ENCODE measurements at regions of chr6 and their contacts with region 1.

Region 1: DNA sequence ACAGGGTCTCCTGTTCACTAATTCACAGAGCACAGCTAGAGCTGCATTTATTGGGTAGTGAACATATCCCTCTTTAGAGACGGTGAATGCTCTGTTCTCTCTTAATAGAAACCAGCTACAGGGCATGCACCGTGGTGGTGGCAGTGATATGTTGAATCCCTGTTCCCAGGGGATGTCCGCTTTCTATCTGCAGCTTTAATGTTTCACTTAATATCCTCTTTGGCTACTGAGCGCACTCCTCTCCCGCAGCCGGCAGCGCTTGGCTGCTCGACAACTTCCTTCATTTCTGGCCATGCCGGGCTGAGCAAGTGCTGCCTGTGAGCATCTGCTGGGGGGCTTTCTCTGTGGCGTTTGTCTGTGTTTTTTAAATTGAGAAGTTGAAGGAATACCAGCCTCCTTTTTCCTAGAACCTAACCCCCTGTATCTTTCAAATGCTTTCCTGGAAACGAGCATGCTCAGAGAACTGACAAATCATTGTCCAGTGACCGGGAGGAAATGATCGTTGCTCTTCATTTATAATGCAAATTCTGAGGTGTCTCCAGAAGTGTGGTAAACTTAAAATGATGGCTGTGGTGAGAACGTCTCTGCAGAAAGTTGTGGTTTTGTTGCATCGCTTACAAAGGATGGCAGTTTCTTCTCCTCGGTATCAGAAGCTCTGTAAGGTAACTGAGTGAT is 297.9 kb downstream of the UTRN start:
- DNase-seq: peak; percentile 66
- H3K4me3 ChIP-seq: peak overlapping the region in 2 of 4 donors; percentile 12 to 15
- H3K27ac ChIP-seq: no peak overlapping the region
- H3K4me1 ChIP-seq: peaks cover 0 to 33% (median 10%) of the 10 kb centered on the region in 4 donors
- H3K27me3 ChIP-seq: no peaks in the 10 kb centered on the region
- CTCF ChIP-seq: no peak
- EP300 ChIP-seq: no peak
- POLR2A ChIP-seq: no peak

Region 2: GRCh38 chr6:144384427-144384826 is 198.6 kb before region 1 on chr6:
- intact Hi-C with region 1: no loop called
- DNase-seq: no peak
- H3K4me3 ChIP-seq: no peak overlapping the region
- H3K27ac ChIP-seq: no peak overlapping the region
- H3K4me1 ChIP-seq: peaks cover 0 to 5% (median 0%) of the 10 kb centered on the region in 4 donors
- H3K27me3 ChIP-seq: no peaks in the 10 kb centered on the region
- CTCF ChIP-seq: no peak
- EP300 ChIP-seq: no peak
- POLR2A ChIP-seq: no peak

Region 3: DNA sequence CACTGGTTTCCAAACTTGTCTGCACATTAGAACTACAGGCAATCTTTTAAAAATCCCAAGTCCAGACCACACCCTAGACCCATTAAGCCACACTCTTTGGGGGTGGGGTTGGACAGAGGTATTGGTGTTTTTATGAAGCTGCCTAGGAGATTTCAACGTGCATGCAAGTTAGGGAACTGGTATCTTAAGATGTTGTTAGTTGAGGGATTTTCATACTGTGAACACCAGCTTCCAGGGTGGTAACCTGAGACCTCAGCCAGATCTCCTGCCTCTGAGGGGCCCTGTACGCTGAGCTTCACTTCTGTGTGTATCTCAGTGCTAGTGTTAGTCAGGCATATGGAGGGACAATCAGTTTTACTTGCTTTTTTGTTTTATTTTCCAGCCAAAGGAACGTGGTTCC is 159.9 kb before region 1 on chr6:
- intact Hi-C with region 1: no loop called
- DNase-seq: no peak
- H3K4me3 ChIP-seq: no peak overlapping the region
- H3K27ac ChIP-seq: no peak overlapping the region
- H3K4me1 ChIP-seq: no peaks in the 10 kb centered on the region
- H3K27me3 ChIP-seq: no peaks in the 10 kb centered on the region
- CTCF ChIP-seq: no peak
- EP300 ChIP-seq: no peak
- POLR2A ChIP-seq: no peak

Region 4: DNA sequence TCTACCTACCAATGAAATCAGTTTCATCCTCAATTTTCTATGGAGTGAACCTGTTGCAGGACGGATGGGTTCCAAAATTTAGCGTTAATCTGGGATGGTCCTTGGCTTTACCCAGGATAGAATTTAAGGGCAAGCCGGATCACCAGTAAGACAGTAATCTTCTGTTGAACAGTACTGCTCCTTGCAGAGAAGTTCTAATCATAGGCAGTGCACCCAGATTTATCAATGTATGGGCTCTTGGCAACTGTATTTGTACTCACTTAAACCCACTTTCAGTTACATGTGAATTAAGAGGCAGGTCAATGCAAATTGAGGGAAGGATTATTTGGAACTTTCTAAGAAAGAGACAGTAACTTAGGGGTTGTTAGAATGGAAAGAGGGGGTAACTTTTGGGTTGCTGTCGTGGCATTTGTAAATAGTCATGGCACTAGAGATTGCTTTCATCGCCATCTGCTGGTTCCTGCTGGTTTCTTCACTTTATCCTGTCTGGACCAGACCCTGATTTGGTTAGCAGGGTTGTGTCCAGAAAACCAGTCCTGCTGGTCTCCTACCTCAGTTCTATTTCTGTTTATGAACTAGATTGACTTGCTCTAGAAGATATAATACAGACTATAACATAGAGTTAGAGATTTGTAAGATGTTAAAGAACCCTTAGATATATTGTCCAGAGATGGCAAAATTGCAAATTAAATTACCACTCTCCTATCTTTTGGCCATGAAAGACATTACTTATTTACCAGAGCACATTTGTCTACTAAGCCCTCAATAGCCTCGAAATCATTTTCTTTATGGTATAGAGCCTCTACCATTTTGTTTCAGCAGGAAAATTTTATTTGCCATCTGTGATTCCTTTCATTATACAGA is 348.3 kb after region 1 on chr6:
- intact Hi-C with region 1: loop called (anchors 5 kb)
- DNase-seq: no peak
- H3K4me3 ChIP-seq: no peak overlapping the region
- H3K27ac ChIP-seq: no peak overlapping the region
- H3K4me1 ChIP-seq: peaks cover 0 to 4% (median 0%) of the 10 kb centered on the region in 4 donors
- H3K27me3 ChIP-seq: no peaks in the 10 kb centered on the region
- CTCF ChIP-seq: peak in 2 of 4 experiments; percentile 17 to 51
- EP300 ChIP-seq: no peak
- POLR2A ChIP-seq: no peak

Region 5: DNA sequence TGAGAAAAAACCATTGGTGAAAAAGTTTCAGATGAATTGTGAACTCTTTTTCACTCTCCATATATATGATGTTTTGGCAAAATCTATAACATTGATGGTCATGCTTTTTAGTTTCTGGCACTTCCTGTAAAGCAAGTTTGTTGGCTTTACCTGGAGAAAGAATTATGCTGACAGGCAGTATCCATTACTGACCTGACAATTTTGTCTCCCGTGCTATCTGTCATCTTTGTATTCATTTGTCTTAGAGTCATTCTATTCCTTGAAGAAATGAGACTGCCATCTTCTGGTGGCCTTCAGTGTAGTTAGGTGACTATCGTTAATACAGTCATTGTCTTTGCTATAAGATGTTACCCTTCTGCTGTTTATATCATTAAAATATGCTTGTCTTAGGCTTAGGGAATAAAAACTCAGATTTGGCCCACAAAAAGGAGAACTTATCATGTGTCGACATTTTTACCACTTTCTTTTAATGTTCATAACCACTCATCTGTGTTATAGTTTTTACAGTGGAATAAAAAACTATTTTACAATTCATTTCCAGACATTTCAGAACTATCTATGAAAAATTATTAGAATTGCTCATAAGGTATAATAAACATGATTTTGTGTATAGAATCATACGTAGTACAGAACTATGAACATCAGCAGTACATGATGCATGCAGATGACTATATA is 445.2 kb after region 1 on chr6:
- intact Hi-C with region 1: loop called (anchors 5 kb)
- DNase-seq: no peak
- H3K4me3 ChIP-seq: no peak overlapping the region
- H3K27ac ChIP-seq: no peak overlapping the region
- H3K4me1 ChIP-seq: peaks cover 0 to 4% (median 0%) of the 10 kb centered on the region in 4 donors
- H3K27me3 ChIP-seq: no peaks in the 10 kb centered on the region
- CTCF ChIP-seq: peak in 1 of 4 experiments; percentile 30
- EP300 ChIP-seq: no peak
- POLR2A ChIP-seq: no peak

Region 6: DNA sequence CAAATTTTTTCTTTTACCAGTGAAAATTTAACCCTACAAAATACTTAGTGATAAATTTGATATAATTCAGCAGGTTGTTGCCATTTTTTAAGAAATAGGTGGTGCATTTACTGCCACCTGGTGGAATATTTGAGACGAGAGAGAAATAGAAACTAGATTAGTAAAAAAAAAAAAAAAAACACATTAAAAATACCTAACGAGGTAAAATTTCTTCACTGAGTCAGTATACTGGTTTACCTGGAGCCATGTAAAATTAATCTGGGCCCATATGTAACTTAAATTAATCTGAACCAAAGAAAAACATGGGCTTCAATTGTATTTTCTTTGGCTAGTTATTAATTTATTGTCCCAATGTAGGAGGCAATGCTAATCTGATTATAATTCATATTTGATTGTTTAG is 631.5 kb after region 1 on chr6:
- intact Hi-C with region 1: loop called (anchors 2 kb)
- DNase-seq: no peak
- H3K4me3 ChIP-seq: no peak overlapping the region
- H3K27ac ChIP-seq: no peak overlapping the region
- H3K4me1 ChIP-seq: peaks cover 0 to 16% (median 12%) of the 10 kb centered on the region in 4 donors
- H3K27me3 ChIP-seq: no peaks in the 10 kb centered on the region
- CTCF ChIP-seq: peak in 1 of 4 experiments; percentile 52
- EP300 ChIP-seq: no peak
- POLR2A ChIP-seq: no peak

Region 7: GRCh38 chr6:145633981-145634627 is 1051.0 kb after region 1 on chr6:
- intact Hi-C with region 1: loop called (anchors 5 kb)
- DNase-seq: peak; percentile 85
- H3K4me3 ChIP-seq: no peak overlapping the region
- H3K27ac ChIP-seq: no peak overlapping the region
- H3K4me1 ChIP-seq: no peaks in the 10 kb centered on the region
- H3K27me3 ChIP-seq: no peaks in the 10 kb centered on the region
- CTCF ChIP-seq: peak; percentile 25 to 76 (median 64)
- EP300 ChIP-seq: no peak
- POLR2A ChIP-seq: no peak